Tibial artery (tissue), 4 donors: ENCODE measurements at regions of chr12 and their contacts with region 1.

Region 1: GRCh38 chr12:48084066-48084465 is 21.8 kb downstream of the SENP1 start:
- DNase-seq: no peak
- H3K4me3 ChIP-seq: no peak overlapping the region
- H3K27ac ChIP-seq: no peak overlapping the region
- H3K4me1 ChIP-seq: no peaks in the 10 kb centered on the region
- H3K27me3 ChIP-seq: no peaks in the 10 kb centered on the region
- CTCF ChIP-seq: peak; percentile 32 to 49

Region 2: DNA sequence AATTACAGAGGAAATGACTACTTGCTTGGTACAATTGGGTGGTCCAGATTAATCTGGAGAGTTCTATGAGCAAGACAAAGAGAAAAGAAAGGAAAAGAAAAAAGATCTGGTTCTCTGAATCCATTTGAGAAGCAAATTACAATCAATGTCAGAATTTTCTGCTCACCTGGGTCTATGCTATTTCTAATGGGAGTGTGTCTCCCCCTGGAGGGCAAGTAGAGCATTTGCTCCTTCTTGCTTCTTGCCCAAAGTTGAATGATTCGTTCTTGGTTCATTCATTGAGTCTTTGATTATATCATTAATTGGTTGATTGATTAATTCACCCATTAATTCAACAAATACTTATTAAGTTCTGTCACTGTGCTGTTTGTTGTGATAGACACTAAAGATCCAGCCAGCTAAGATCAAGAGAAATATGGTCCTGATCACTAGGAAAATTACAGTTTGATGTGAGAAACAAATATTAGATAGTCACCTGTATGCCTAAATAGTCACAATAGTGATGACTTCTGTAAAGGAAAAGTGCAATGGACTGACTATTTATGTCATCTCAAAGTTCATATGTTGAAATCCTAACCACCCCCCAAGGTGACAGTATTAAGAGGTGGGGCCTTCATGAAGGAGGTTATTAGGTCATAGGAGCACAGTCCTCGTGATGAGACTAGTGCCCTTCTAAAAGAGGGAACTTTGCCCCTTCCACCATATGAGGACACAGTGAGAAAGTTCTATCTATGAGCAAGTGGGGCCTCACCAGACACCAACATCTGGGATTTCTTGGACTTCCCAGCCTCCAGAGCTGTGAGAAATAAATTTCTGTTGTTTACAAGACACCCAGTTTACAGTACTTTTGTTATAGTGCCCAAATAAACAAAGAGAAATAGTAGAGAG is 81.3 kb after region 1 on chr12:
- intact Hi-C with region 1: loop called (anchors 5 kb)
- DNase-seq: no peak
- H3K4me3 ChIP-seq: no peak overlapping the region
- H3K27ac ChIP-seq: no peak overlapping the region
- H3K4me1 ChIP-seq: no peaks in the 10 kb centered on the region
- H3K27me3 ChIP-seq: peaks cover 0 to 15% of the 10 kb centered on the region in 2 donors
- CTCF ChIP-seq: peak; percentile 82 to 90